ENCODE measurements at regions of chrX and their contacts with region 1.

Region 1: GRCh38 chrX:18210470-18210869 is 10.2 kb downstream of the BEND2 start:
- DNase-seq: no peak
- H3K4me3 Mint-ChIP-seq: no peak overlapping the region
- H3K27ac Mint-ChIP-seq: no peak overlapping the region
- H3K4me1 Mint-ChIP-seq: no peaks in the 10 kb centered on the region
- H3K27me3 Mint-ChIP-seq: no peaks in the 10 kb centered on the region
- CTCF ChIP-seq: no peak

Region 2: DNA sequence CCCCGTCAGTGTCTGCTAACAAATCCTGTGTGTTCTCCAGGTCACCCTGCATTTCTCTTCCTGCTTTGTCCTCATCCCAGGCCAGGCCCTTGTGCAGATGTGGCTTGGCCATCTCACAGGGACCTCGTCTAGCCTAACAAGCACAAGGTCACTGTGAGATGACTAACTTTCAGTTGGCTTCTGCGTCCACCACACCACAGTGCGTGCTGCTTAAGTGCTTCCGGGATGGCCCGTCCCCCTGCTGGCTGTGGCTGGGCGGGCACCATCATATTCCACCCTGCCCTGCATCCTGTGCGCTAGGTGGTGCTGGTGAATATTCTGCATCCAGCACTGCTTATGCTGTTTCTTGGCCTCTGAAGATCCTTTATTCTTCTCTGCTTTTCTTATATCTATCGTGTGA is 1374.1 kb before region 1 on chrX:
- CTCF ChIA-PET with region 1: no interaction called
- POLR2A ChIA-PET with region 1: no interaction called
- intact Hi-C with region 1: no loop called
- DNase-seq: no peak
- H3K4me3 Mint-ChIP-seq: no peak overlapping the region
- H3K27ac Mint-ChIP-seq: no peak overlapping the region
- H3K4me1 Mint-ChIP-seq: peaks cover 15% of the 10 kb centered on the region
- H3K27me3 Mint-ChIP-seq: no peaks in the 10 kb centered on the region
- CTCF ChIP-seq: peak; percentile 9

Region 3: DNA sequence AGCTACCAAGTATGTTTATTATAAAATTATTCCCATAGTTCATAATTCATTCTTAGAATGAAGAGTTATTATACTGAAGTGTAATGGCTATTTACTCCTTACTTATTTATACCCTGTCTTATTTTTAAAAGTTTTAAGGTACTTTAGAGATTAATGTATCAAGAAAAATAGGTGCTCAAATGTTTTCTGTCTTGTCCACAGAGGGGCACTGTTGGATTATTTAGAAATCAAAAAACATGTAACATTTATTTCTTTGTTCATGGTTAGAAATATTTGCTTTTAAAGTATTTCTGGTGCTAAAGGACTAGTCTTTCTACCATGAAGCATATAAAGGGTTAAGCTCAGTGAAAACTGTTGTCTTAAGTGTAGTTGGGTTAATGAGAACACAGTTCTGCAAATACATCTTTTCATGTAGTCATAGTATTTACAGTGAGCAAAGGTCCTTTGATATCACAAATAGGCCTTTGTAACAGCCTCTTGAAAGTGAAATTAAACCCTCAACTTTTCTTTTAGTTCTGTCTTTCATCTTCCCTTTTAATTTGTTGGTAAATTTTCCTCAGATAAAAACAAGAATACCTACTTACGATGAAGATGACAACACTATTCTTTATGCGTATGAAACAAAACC is 465.5 kb before region 1 on chrX:
- CTCF ChIA-PET with region 1: interaction called, 3 read pairs
- POLR2A ChIA-PET with region 1: no interaction called
- intact Hi-C with region 1: loop called (anchors 1 kb)
- DNase-seq: peak; percentile 14
- H3K4me3 Mint-ChIP-seq: no peak overlapping the region
- H3K27ac Mint-ChIP-seq: no peak overlapping the region
- H3K4me1 Mint-ChIP-seq: peaks cover 4% of the 10 kb centered on the region
- H3K27me3 Mint-ChIP-seq: peaks cover 40% of the 10 kb centered on the region
- CTCF ChIP-seq: peak; percentile 43

Region 4: GRCh38 chrX:18390941-18391538 is 180.6 kb after region 1 on chrX:
- CTCF ChIA-PET with region 1: no interaction called
- POLR2A ChIA-PET with region 1: no interaction called
- intact Hi-C with region 1: no loop called
- DNase-seq: peak; percentile 52
- H3K4me3 Mint-ChIP-seq: no peak overlapping the region
- H3K27ac Mint-ChIP-seq: no peak overlapping the region
- H3K4me1 Mint-ChIP-seq: no peaks in the 10 kb centered on the region
- H3K27me3 Mint-ChIP-seq: no peaks in the 10 kb centered on the region
- CTCF ChIP-seq: peak; percentile 67

Measured in MCF 10A (cell line).